ENCODE measurements at regions of chr2 and their contacts with region 1.

Region 1: GRCh38 chr2:62456721-62457539 is 49.1 kb downstream of the TMEM17 start:
- DNase-seq: peak; percentile 71 to 81
- ATAC-seq: peak; percentile 89 to 96 (median 90)
- H3K4me3 ChIP-seq: peak overlapping the region; percentile 76
- H3K27ac ChIP-seq: peak overlapping the region; percentile 32
- H3K4me1 ChIP-seq: no peaks in the 10 kb centered on the region
- H3K27me3 ChIP-seq: no peaks in the 10 kb centered on the region
- CTCF ChIP-seq: peak; percentile 99

Region 2: GRCh38 chr2:62313449-62314227 is 143.3 kb before region 1 on chr2:
- intact Hi-C with region 1: no loop called
- DNase-seq: no peak
- ATAC-seq: no peak
- H3K4me3 ChIP-seq: no peak overlapping the region
- H3K27ac ChIP-seq: no peak overlapping the region
- H3K4me1 ChIP-seq: peaks cover 3% of the 10 kb centered on the region
- H3K27me3 ChIP-seq: no peaks in the 10 kb centered on the region
- CTCF ChIP-seq: no peak

Region 3: DNA sequence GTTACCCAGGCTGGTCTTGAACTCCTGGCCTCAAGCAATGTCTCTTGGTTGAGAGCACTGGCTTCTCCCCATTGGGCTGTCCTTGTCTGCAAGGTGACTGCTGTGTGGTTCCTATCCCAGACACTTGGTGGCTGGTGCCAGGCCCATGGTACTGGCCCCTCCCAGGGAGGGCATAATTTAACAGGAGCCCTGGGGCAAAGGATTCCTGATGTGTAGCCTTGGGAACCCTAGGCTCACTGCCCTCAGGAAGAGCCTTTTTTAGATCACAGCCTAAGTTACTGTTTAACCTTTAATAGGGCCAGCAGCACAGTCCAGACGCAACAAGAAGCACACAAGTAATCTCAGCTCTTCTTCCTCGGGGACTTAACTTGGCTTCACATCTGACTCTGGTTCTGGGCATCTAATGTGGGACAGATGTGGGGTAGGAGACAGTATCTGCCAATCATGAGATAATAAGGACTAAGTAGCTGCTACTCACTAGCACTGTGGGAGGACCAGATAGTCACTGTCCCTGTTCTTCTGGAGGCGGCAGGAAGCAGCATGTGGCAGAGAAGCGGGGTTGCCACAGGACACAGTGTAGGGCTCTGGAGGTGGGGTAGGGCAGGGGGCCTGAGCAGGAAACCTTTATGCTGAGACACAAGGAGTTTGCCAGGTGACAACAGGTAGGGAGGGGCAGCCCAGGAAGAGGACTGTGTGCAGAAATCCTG is 87.3 kb before region 1 on chr2:
- intact Hi-C with region 1: no loop called
- DNase-seq: no peak
- ATAC-seq: no peak
- H3K4me3 ChIP-seq: no peak overlapping the region
- H3K27ac ChIP-seq: no peak overlapping the region
- H3K4me1 ChIP-seq: no peaks in the 10 kb centered on the region
- H3K27me3 ChIP-seq: no peaks in the 10 kb centered on the region
- CTCF ChIP-seq: no peak

Region 4: GRCh38 chr2:62774555-62775366 is 317.8 kb after region 1 on chr2:
- intact Hi-C with region 1: loop called (anchors 1 to 2 kb)
- DNase-seq: no peak
- ATAC-seq: peak in 3 of 4 donors; percentile 58 to 88 (median 77)
- H3K4me3 ChIP-seq: no peak overlapping the region
- H3K27ac ChIP-seq: no peak overlapping the region
- H3K4me1 ChIP-seq: no peaks in the 10 kb centered on the region
- H3K27me3 ChIP-seq: no peaks in the 10 kb centered on the region
- CTCF ChIP-seq: peak; percentile 82